ENCODE measurements at regions of chr15 and their contacts with region 1.

Region 1: GRCh38 chr15:92881802-92882696 is 18.1 kb upstream of the CHD2 start:
- DNase-seq: peak; percentile 98 to 99 (median 99)
- H3K4me3 ChIP-seq: peak overlapping the region; percentile 60 to 66
- H3K4me3 Mint-ChIP-seq: peak overlapping the region; percentile 82 to 92 (median 90)
- H3K27ac ChIP-seq: peak overlapping the region; percentile 89
- H3K27ac Mint-ChIP-seq: peak overlapping the region; percentile 94 to 99 (median 99)
- H3K4me1 ChIP-seq: peaks cover 52% of the 10 kb centered on the region
- H3K4me1 Mint-ChIP-seq: peaks cover 32 to 64% (median 43%) of the 10 kb centered on the region in 4 donors
- H3K27me3 ChIP-seq: no peaks in the 10 kb centered on the region
- H3K27me3 Mint-ChIP-seq: no peaks in the 10 kb centered on the region

Region 2: DNA sequence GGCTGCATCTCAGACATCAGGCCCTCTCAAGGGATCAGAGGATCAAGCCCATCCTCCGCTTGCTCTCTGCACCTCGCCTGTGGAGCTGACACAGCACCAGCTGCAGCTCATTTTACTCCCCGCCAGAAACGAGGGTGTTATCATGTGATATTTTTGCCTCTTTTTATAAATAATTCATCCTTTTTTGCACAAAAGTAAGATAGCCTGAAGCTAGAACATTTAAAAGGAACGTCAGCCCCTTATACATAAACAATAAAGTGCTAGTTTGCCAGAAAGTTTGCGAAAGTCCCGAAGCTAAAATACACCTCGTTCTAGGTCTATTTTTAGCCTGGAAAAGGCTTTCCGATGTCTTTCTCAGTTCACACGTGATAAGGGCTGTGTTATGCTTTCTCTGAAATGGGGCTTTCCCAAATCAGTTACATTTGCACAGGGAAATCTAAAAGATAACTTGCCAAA is 216.9 kb before region 1 on chr15:
- CTCF ChIA-PET with region 1: no interaction called
- POLR2A ChIA-PET with region 1: no interaction called
- intact Hi-C with region 1: no loop called
- DNase-seq: no peak
- H3K4me3 ChIP-seq: no peak overlapping the region
- H3K4me3 Mint-ChIP-seq: no peak overlapping the region
- H3K27ac ChIP-seq: no peak overlapping the region
- H3K27ac Mint-ChIP-seq: no peak overlapping the region
- H3K4me1 ChIP-seq: no peaks in the 10 kb centered on the region
- H3K4me1 Mint-ChIP-seq: no peaks in the 10 kb centered on the region
- H3K27me3 ChIP-seq: no peaks in the 10 kb centered on the region
- H3K27me3 Mint-ChIP-seq: peaks cover 6 to 10% of the 10 kb centered on the region in 2 donors

Region 3: DNA sequence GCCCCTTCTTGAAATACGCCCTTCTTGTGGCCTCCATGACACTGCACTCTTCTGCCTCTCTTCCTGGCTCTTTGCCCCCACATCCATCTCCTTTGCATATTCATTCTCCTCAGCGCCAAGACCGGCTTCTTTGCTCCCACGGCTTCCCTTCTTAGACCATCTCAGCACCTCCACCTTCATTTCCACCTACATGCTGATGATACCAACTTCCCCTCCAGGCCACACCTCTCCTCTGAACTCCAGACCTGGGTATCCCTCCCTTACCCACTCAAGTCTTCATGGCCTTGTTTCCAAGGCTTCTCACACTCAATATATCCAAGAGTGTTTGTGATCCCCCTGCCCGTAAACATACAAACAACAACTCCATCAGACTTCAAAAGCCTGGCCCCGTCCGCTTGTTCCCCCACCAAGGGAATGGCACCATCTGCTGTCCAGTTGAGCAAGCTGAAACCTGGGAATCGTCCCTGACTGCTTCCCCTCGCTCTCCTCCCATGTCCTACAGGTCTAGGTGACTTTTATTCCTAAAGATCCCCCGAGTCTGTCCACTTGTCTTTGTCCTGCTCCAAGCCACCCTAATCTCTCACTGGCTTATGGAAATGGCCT is 198.7 kb before region 1 on chr15:
- CTCF ChIA-PET with region 1: no interaction called
- POLR2A ChIA-PET with region 1: no interaction called
- intact Hi-C with region 1: no loop called
- DNase-seq: no peak
- H3K4me3 ChIP-seq: no peak overlapping the region
- H3K4me3 Mint-ChIP-seq: no peak overlapping the region
- H3K27ac ChIP-seq: no peak overlapping the region
- H3K27ac Mint-ChIP-seq: no peak overlapping the region
- H3K4me1 ChIP-seq: no peaks in the 10 kb centered on the region
- H3K4me1 Mint-ChIP-seq: no peaks in the 10 kb centered on the region
- H3K27me3 ChIP-seq: no peaks in the 10 kb centered on the region
- H3K27me3 Mint-ChIP-seq: peaks cover 9 to 31% of the 10 kb centered on the region in 2 donors

Region 4: GRCh38 chr15:92733934-92734521 is 148.0 kb before region 1 on chr15:
- CTCF ChIA-PET with region 1: no interaction called
- POLR2A ChIA-PET with region 1: no interaction called
- intact Hi-C with region 1: no loop called
- DNase-seq: peak in 4 of 5 donors; percentile 4 to 11 (median 8)
- H3K4me3 ChIP-seq: peak overlapping the region in 1 of 2 donors; percentile 50
- H3K4me3 Mint-ChIP-seq: peak overlapping the region; percentile 73 to 91 (median 87)
- H3K27ac ChIP-seq: no peak overlapping the region
- H3K27ac Mint-ChIP-seq: peak overlapping the region in 6 of 7 donors; percentile 70 to 91 (median 84)
- H3K4me1 ChIP-seq: peaks cover 5% of the 10 kb centered on the region
- H3K4me1 Mint-ChIP-seq: peaks cover 0 to 19% (median 4%) of the 10 kb centered on the region in 4 donors
- H3K27me3 ChIP-seq: no peaks in the 10 kb centered on the region
- H3K27me3 Mint-ChIP-seq: peaks cover 5 to 16% of the 10 kb centered on the region in 2 donors

Region 5: GRCh38 chr15:92808978-92809879 is 72.8 kb before region 1 on chr15:
- CTCF ChIA-PET with region 1: interaction called, 82 read pairs
- POLR2A ChIA-PET with region 1: interaction called, 1,104 read pairs
- intact Hi-C with region 1: loop called (anchors 1 kb)
- DNase-seq: peak; percentile 98 to 100 (median 99)
- H3K4me3 ChIP-seq: peak overlapping the region; percentile 84 to 94
- H3K4me3 Mint-ChIP-seq: peak overlapping the region; percentile 79 to 97 (median 89)
- H3K27ac ChIP-seq: peak overlapping the region; percentile 91
- H3K27ac Mint-ChIP-seq: peak overlapping the region; percentile 92 to 100 (median 95)
- H3K4me1 ChIP-seq: peaks cover 58% of the 10 kb centered on the region
- H3K4me1 Mint-ChIP-seq: peaks cover 27 to 68% (median 43%) of the 10 kb centered on the region in 4 donors
- H3K27me3 ChIP-seq: no peaks in the 10 kb centered on the region
- H3K27me3 Mint-ChIP-seq: no peaks in the 10 kb centered on the region

Region 6: DNA sequence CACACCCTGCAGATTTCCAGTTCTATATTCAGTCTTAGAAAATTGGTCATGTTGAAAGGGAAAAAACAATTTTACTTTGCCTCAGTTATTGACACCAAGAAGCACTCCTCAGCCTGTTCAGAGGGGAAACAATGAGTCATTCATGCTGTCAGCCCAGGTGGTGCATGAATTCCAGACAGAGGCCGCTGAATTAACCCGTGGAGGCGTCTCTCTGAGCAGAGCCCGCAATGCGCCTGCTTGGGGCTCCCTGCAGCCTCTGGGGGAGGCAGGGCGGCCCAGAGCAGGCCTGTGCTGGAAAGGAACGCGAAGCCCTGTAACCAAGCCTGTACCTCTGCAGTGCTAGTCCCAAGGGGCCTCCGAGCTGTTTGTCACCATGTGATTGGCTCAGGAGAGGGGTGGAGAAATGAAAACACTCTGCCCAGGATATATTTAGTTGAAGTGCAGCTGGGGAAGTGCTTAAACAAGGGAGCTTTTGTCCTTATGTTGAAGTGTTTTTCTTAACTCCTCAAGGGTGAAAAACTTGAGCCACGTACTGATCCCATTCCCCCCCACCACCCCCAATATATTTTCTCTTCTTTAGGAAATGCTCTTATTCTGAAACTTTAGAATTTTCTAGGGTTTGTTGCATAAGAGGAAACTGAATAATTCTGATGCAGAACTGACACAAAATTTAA is 50.3 kb before region 1 on chr15:
- CTCF ChIA-PET with region 1: interaction called, 64 read pairs
- POLR2A ChIA-PET with region 1: interaction called, 477 read pairs
- intact Hi-C with region 1: loop called (anchors 1 kb)
- DNase-seq: peak; percentile 80 to 98 (median 89)
- H3K4me3 ChIP-seq: peak overlapping the region; percentile 27 to 34
- H3K4me3 Mint-ChIP-seq: peak overlapping the region; percentile 69 to 91 (median 80)
- H3K27ac ChIP-seq: peak overlapping the region; percentile 66
- H3K27ac Mint-ChIP-seq: peak overlapping the region; percentile 93 to 99 (median 95)
- H3K4me1 ChIP-seq: peaks cover 47% of the 10 kb centered on the region
- H3K4me1 Mint-ChIP-seq: peaks cover 29 to 44% (median 38%) of the 10 kb centered on the region in 4 donors
- H3K27me3 ChIP-seq: no peaks in the 10 kb centered on the region
- H3K27me3 Mint-ChIP-seq: peaks cover 0 to 1% of the 10 kb centered on the region in 2 donors

Region 7: DNA sequence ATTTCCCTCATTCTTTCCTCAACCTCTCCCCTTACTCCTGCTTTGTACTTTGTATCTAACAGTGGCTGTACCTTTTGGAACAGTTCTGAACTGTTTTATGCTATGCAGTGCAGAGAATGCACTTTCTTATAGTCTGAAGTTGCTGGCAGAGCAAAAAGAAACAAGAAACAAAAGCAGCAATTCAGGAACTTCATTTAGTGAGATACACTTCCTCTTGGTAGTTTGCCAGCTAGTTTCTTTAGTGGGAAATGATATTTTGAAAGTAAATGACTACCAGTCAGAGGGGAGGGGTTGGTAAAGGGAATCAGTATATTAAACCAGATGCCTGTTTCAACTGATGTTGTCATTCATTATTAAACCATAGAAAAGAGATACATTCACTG is 36.9 kb before region 1 on chr15:
- CTCF ChIA-PET with region 1: interaction called, 4 read pairs
- POLR2A ChIA-PET with region 1: interaction called, 120 read pairs
- intact Hi-C with region 1: loop called (anchors 1 kb)
- DNase-seq: peak in 4 of 5 donors; percentile 57 to 71 (median 66)
- H3K4me3 ChIP-seq: peak overlapping the region; percentile 21 to 25
- H3K4me3 Mint-ChIP-seq: peak overlapping the region; percentile 73 to 94 (median 86)
- H3K27ac ChIP-seq: peak overlapping the region; percentile 44
- H3K27ac Mint-ChIP-seq: peak overlapping the region; percentile 73 to 99 (median 98)
- H3K4me1 ChIP-seq: peaks cover 80% of the 10 kb centered on the region
- H3K4me1 Mint-ChIP-seq: peaks cover 36 to 86% (median 67%) of the 10 kb centered on the region in 4 donors
- H3K27me3 ChIP-seq: no peaks in the 10 kb centered on the region
- H3K27me3 Mint-ChIP-seq: no peaks in the 10 kb centered on the region

Region 8: DNA sequence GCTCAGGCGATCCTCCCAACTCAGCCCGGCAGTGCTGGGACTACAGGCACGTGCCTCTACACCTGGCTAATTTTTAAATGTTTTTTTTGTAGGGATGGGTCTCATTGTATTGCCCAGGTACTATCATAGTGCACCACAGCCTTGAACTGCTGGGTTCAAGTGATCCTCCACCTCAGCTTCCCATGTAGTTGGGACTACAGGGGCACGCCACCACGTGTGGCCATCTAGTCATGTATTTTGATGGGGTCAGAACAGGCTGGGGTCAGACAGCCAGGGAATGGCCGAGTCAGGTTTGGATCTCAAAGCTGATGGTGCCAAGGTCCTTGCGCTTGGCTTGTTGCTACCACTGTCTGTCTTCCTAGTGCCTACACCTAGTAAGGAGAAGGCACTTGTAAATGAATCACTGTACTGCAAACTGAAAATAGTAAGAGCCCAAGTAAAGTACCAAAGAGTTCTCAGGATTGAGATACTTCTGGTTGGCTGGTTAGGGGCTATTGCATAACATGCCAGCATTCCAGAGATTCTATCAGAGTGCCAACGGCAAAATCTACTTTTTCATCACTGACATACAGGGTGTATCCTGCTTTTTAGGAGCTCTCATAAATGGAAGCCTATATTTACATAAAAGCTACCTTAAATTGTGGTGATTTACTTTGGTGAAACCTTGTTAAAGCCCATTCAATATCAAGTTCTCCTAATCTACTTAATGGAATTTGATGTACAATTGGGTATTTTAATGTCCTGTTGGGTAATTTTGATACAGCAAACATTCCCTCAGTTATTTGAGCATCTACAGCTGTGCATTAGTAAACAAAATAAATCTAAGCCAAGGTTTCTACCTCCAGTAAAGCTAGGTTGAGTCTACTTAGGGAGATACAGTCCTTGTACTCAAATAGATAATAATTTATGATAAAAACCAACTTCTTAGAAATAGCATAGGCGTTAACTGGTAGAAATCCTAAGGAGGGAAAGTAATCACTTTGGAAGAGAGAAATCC is 12.8 kb before region 1 on chr15:
- CTCF ChIA-PET with region 1: interaction called, 3 read pairs
- POLR2A ChIA-PET with region 1: interaction called, 19 read pairs
- intact Hi-C with region 1: no loop called
- DNase-seq: no peak
- H3K4me3 ChIP-seq: no peak overlapping the region
- H3K4me3 Mint-ChIP-seq: no peak overlapping the region
- H3K27ac ChIP-seq: no peak overlapping the region
- H3K27ac Mint-ChIP-seq: peak overlapping the region in 1 of 7 donors; percentile 65
- H3K4me1 ChIP-seq: no peaks in the 10 kb centered on the region
- H3K4me1 Mint-ChIP-seq: peaks cover 5 to 8% (median 6%) of the 10 kb centered on the region in 4 donors
- H3K27me3 ChIP-seq: no peaks in the 10 kb centered on the region
- H3K27me3 Mint-ChIP-seq: no peaks in the 10 kb centered on the region

Region 9: GRCh38 chr15:92903941-92904831 is 22.1 kb after region 1 on chr15:
- CTCF ChIA-PET with region 1: interaction called, 21 read pairs
- POLR2A ChIA-PET with region 1: interaction called, 888 read pairs
- intact Hi-C with region 1: loop called (anchors 1 kb)
- DNase-seq: peak; percentile 99
- H3K4me3 ChIP-seq: peak overlapping the region; percentile 67 to 75
- H3K4me3 Mint-ChIP-seq: peak overlapping the region; percentile 94 to 99 (median 98)
- H3K27ac ChIP-seq: peak overlapping the region; percentile 95
- H3K27ac Mint-ChIP-seq: peak overlapping the region; percentile 98 to 100 (median 100)
- H3K4me1 ChIP-seq: peaks cover 71% of the 10 kb centered on the region
- H3K4me1 Mint-ChIP-seq: peaks cover 50 to 78% (median 63%) of the 10 kb centered on the region in 4 donors
- H3K27me3 ChIP-seq: no peaks in the 10 kb centered on the region
- H3K27me3 Mint-ChIP-seq: no peaks in the 10 kb centered on the region

Measured in CD4-positive, alpha-beta memory T cell (primary cell).